GM13977 (cell line): ENCODE measurements at regions of chr3 and their contacts with region 1.

Region 1: GRCh38 chr3:68876112-68876713 is 56.1 kb downstream of the TAFA4 start:
- DNase-seq: peak; percentile 20
- CTCF ChIP-seq: peak; percentile 87

Region 2: GRCh38 chr3:66938338-66938963 is 1937.8 kb before region 1 on chr3:
- in situ Hi-C with region 1: loop called (anchors 25 kb)
- DNase-seq: peak; percentile 34
- CTCF ChIP-seq: peak; percentile 73

Region 3: GRCh38 chr3:67113802-67114407 is 1762.3 kb before region 1 on chr3:
- in situ Hi-C with region 1: loop called (anchors 25 kb)
- DNase-seq: peak; percentile 46
- CTCF ChIP-seq: peak; percentile 99

Region 4: GRCh38 chr3:67357610-67358458 is 1518.4 kb before region 1 on chr3:
- in situ Hi-C with region 1: loop called (anchors 25 kb)
- DNase-seq: peak; percentile 24
- CTCF ChIP-seq: peak; percentile 64

Region 5: DNA sequence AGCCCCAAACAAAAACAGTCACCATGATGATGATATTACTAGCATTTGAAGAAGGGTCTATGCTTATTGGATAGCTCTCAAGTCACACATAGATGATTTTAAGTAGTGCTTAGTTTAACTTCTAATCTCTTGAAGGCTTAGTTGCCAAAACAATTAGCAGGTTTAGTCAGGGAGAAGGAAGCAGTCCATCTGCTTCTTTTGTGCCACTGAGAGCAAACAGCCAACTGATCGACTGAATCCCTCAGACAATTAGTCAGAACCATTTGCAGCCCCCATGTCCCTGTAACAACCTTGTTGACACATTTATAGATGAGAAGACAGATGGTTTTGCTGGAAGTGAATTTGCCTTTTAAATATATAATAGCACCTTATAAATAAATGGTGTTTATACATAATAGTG is 636.7 kb before region 1 on chr3:
- in situ Hi-C with region 1: no loop called
- DNase-seq: no peak
- CTCF ChIP-seq: no peak

Region 6: GRCh38 chr3:68360492-68360891 is 515.7 kb before region 1 on chr3:
- in situ Hi-C with region 1: no loop called
- DNase-seq: no peak
- CTCF ChIP-seq: no peak

Region 7: GRCh38 chr3:68779261-68779660 is 97.0 kb before region 1 on chr3:
- in situ Hi-C with region 1: no loop called
- DNase-seq: no peak
- CTCF ChIP-seq: no peak

Region 8: GRCh38 chr3:69200384-69201068 is 324.3 kb after region 1 on chr3:
- in situ Hi-C with region 1: no loop called
- DNase-seq: no peak
- CTCF ChIP-seq: no peak